MCF 10A (cell line): ENCODE measurements at regions of chr9 and their contacts with region 1.

Region 1: DNA sequence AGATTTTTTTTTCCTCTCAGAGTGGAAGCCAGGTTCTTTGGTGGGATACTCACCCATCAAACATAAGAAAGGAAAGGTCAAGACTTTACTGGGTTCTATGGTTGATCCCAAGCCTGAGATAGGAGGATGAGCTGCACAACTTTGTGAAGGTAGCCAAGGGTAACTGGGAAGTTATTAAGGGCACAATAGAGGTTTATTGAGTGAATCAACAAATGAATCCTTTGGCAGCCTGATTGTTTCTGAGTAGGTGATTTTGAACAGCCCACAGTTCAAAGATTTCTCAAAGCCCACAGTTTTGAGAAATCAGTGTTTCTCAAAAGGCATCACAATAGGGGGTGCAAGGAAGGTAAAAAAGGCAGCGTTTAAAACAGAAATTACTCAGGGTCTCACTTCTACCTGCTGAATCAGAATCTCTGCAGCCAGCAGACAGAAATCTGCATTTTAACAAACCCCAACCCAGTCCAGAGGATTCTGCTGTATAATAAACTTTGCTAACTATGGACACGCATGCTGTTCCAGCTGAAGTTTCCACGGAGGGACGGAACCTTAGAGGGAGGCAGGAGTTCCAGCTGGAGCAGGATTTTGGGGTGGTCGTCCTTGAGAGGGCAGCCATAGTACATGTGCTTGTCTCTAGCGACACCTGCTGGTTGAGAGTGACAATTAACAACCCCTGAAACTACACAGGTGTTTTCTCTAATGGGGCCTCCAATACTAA is 32.7 kb upstream of the FSD1L start:
- DNase-seq: peak; percentile 73
- H3K4me3 Mint-ChIP-seq: no peak overlapping the region
- H3K27ac Mint-ChIP-seq: no peak overlapping the region
- H3K4me1 Mint-ChIP-seq: peaks cover 6% of the 10 kb centered on the region
- H3K27me3 Mint-ChIP-seq: no peaks in the 10 kb centered on the region
- CTCF ChIP-seq: peak; percentile 91

Region 2: GRCh38 chr9:104725014-104725413 is 690.1 kb before region 1 on chr9:
- CTCF ChIA-PET with region 1: no interaction called
- POLR2A ChIA-PET with region 1: no interaction called
- intact Hi-C with region 1: no loop called
- DNase-seq: peak; percentile 13
- H3K4me3 Mint-ChIP-seq: no peak overlapping the region
- H3K27ac Mint-ChIP-seq: no peak overlapping the region
- H3K4me1 Mint-ChIP-seq: peaks cover 7% of the 10 kb centered on the region
- H3K27me3 Mint-ChIP-seq: no peaks in the 10 kb centered on the region
- CTCF ChIP-seq: no peak

Region 3: DNA sequence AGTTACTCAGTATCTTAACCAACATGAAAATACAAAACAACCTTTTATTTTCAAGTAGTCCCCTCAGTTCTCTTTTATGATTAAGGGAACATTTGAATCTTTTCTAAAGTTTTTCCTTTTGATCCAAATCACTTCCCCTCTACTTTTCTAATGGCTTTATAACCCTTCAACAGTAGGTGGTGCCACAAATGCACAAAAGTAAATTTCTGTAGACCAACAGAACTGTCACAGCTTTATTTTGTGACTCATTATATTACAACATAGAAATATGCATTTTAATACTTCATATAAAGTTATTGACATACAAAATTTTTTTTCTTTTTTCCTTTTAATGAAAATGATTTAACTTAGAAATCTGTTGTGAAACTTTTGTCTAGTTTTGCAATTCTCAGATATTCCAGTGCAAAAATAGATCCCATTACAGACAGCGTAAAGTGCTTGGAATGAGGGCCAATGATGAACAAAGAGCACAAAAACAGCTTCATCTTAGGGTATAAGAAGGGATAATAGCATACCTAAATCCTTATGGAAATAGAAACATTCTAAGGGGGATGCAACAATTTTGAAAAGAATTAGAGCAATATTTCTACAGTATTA is 634.2 kb before region 1 on chr9:
- CTCF ChIA-PET with region 1: interaction called, 14 read pairs
- POLR2A ChIA-PET with region 1: no interaction called
- intact Hi-C with region 1: loop called (anchors 1 kb)
- DNase-seq: peak; percentile 71
- H3K4me3 Mint-ChIP-seq: no peak overlapping the region
- H3K27ac Mint-ChIP-seq: no peak overlapping the region
- H3K4me1 Mint-ChIP-seq: no peaks in the 10 kb centered on the region
- H3K27me3 Mint-ChIP-seq: no peaks in the 10 kb centered on the region
- CTCF ChIP-seq: peak; percentile 45

Region 4: DNA sequence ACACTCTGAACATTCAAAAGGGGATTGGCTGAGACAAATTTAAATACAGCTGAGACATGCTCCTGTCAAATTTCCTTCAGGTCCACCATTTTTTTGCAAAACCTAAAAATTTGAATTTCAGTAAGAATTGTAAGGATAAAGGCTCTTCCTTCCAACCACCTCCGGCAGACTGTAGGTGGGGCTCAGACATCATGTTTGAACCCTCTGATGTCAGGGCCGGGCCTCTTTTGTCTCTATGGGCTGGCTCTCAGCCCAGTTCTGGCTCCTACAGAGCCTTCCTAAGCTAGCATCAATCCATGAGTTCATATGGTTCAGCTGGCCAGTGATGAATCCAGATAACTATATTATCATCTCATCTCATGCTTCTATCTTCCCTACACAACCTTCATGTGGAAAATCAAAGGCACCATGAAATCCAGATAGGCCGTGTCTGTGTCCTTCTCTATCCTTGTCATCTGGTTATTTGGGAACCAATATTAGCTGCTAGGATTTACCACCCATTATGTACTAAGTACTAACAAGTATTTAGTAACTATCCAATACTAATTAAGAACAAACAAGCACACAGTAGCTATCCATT is 607.0 kb before region 1 on chr9:
- CTCF ChIA-PET with region 1: interaction called, 4 read pairs
- POLR2A ChIA-PET with region 1: no interaction called
- intact Hi-C with region 1: loop called (anchors 1 kb)
- DNase-seq: peak; percentile 63
- H3K4me3 Mint-ChIP-seq: no peak overlapping the region
- H3K27ac Mint-ChIP-seq: no peak overlapping the region
- H3K4me1 Mint-ChIP-seq: peaks cover 19% of the 10 kb centered on the region
- H3K27me3 Mint-ChIP-seq: no peaks in the 10 kb centered on the region
- CTCF ChIP-seq: peak; percentile 19

Region 5: GRCh38 chr9:105087910-105088888 is 326.9 kb before region 1 on chr9:
- CTCF ChIA-PET with region 1: interaction called, 3 read pairs
- POLR2A ChIA-PET with region 1: no interaction called
- intact Hi-C with region 1: loop called (anchors 2 kb)
- DNase-seq: peak; percentile 55
- H3K4me3 Mint-ChIP-seq: no peak overlapping the region
- H3K27ac Mint-ChIP-seq: no peak overlapping the region
- H3K4me1 Mint-ChIP-seq: peaks cover 10% of the 10 kb centered on the region
- H3K27me3 Mint-ChIP-seq: no peaks in the 10 kb centered on the region
- CTCF ChIP-seq: no peak

Region 6: DNA sequence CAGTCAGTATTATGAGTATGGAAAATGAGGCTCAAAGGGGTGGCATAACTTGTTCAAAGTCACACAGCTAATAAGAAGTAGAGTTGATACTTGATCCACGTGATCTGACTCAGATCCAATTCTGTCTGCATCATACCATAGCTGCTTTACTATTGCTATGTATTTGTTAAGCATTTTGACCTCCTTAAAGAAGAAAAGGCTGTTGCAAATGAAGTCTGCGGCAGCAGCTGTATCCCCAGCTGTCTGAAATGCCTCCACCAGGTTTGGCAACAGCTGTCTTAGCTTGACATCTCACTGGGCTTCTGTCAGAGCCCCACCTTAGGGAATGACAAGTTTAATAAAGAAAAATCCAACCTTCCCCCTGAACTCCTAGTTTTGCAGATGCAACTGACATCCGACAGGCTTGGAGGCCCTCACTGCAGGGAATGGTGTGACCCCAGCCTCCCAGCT is 246.2 kb before region 1 on chr9:
- CTCF ChIA-PET with region 1: interaction called, 197 read pairs
- POLR2A ChIA-PET with region 1: no interaction called
- intact Hi-C with region 1: no loop called
- DNase-seq: no peak
- H3K4me3 Mint-ChIP-seq: no peak overlapping the region
- H3K27ac Mint-ChIP-seq: no peak overlapping the region
- H3K4me1 Mint-ChIP-seq: peaks cover 7% of the 10 kb centered on the region
- H3K27me3 Mint-ChIP-seq: no peaks in the 10 kb centered on the region
- CTCF ChIP-seq: no peak

Region 7: DNA sequence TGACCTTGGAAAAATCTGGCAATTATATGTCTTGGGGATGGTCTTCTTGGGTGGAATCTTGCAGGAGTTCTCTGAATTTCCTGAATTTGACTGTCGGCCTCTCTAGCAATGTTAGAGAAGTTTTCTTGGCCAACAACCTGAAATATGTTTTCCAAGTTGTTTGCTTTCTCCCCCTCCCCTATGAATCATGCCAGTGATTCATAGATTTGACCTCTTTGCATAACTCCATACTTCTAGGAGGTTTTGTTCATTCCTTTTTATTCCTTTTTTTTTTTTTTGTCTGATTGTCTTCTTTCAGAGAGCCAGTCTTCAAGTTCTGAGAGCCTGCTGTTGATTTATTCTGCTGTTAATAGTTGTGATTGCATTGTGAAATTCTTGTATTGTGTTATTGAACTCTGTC is 227.3 kb before region 1 on chr9:
- CTCF ChIA-PET with region 1: interaction called, 4 read pairs
- POLR2A ChIA-PET with region 1: no interaction called
- intact Hi-C with region 1: loop called (anchors 1 kb)
- DNase-seq: peak; percentile 88
- H3K4me3 Mint-ChIP-seq: peak overlapping the region; percentile 46
- H3K27ac Mint-ChIP-seq: peak overlapping the region; percentile 88
- H3K4me1 Mint-ChIP-seq: peaks cover 38% of the 10 kb centered on the region
- H3K27me3 Mint-ChIP-seq: no peaks in the 10 kb centered on the region
- CTCF ChIP-seq: no peak

Region 8: DNA sequence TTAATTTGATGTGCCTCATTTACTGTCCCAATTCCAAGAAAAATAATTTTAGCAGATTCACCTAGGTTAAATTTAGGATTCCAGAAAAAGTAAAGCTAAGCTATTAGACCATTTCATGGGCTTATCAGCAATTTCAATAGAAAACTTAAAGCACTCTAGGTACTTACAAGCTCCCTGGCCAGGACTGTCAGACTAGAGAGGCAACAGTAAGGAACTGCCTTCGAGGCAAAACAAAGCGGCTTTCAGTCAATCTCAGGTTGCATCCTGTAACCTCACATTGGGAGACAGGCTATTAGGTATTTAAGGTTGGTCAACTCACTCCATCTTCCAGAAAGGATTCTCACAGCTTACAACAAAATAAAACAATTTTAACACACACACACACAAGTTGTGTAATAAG is 16.0 kb before region 1 on chr9:
- CTCF ChIA-PET with region 1: interaction called, 15 read pairs
- POLR2A ChIA-PET with region 1: no interaction called
- intact Hi-C with region 1: no loop called
- DNase-seq: no peak
- H3K4me3 Mint-ChIP-seq: no peak overlapping the region
- H3K27ac Mint-ChIP-seq: no peak overlapping the region
- H3K4me1 Mint-ChIP-seq: no peaks in the 10 kb centered on the region
- H3K27me3 Mint-ChIP-seq: no peaks in the 10 kb centered on the region
- CTCF ChIP-seq: no peak

Region 9: DNA sequence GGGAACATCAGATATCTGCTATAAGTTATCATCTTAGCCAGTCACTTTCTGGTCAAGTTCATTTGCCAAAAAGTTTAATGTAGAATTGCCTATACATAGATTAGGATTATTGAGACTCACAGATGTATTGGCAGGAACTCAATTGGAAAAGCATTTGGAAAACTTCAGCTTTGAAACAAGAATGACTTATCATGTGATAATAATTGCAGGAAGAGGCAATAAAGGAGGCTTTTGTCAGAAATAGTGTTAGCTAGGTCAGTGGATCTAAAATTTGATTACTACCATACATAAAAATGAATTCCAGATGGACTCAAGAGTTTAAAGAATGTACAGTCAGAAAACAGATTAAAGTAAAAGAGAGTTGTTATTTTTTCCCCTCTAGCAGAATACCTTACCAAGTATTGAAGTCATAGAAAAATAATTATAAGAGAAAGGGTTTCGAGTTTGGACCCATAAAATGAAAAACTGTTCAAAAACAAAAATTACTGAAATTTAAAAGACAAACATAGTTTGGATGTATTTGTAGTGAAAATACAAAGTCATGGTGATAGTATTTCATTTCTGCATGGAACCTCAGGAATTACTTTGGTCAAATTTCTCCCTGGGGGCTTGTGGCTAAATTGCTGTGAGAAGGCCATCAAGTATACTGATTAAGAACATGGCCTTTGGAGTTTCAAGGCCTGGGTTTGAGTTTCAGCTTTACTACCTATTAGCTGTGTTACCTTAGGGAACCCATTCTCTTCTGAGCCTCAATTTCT is 439.1 kb after region 1 on chr9:
- CTCF ChIA-PET with region 1: no interaction called
- POLR2A ChIA-PET with region 1: no interaction called
- intact Hi-C with region 1: no loop called
- DNase-seq: no peak
- H3K4me3 Mint-ChIP-seq: no peak overlapping the region
- H3K27ac Mint-ChIP-seq: no peak overlapping the region
- H3K4me1 Mint-ChIP-seq: peaks cover 5% of the 10 kb centered on the region
- H3K27me3 Mint-ChIP-seq: no peaks in the 10 kb centered on the region
- CTCF ChIP-seq: no peak